PC-9 (cell line): ENCODE measurements at regions of chr14 and their contacts with region 1.

Region 1: GRCh38 chr14:34875031-34875922 is at the start of gene BAZ1A:
- DNase-seq: peak; percentile 56 to 82
- H3K4me3 ChIP-seq: peak within 1 kb of the TSS; percentile 77
- H3K27ac ChIP-seq: peak within 1 kb of the TSS; percentile 92
- H3K4me1 ChIP-seq: peaks cover 18% of the 10 kb centered on the region; the same call in 1 of the 2 replicates
- H3K27me3 ChIP-seq: no peaks in the 10 kb centered on the region
- CTCF ChIP-seq: no peak
- total RNA-seq, gene BAZ1A: 14.3 and 17.3 TPM in 2 replicates

Region 2: GRCh38 chr14:34478261-34478660 is 397.0 kb before region 1 on chr14:
- CTCF ChIA-PET with region 1: no interaction called
- POLR2A ChIA-PET with region 1: interaction called, 12 read pairs
- intact Hi-C with region 1: no loop called
- DNase-seq: no peak
- H3K4me3 ChIP-seq: no peak overlapping the region
- H3K27ac ChIP-seq: no peak overlapping the region
- H3K4me1 ChIP-seq: peaks cover 28% of the 10 kb centered on the region
- H3K27me3 ChIP-seq: no peaks in the 10 kb centered on the region
- CTCF ChIP-seq: no peak

Region 3: DNA sequence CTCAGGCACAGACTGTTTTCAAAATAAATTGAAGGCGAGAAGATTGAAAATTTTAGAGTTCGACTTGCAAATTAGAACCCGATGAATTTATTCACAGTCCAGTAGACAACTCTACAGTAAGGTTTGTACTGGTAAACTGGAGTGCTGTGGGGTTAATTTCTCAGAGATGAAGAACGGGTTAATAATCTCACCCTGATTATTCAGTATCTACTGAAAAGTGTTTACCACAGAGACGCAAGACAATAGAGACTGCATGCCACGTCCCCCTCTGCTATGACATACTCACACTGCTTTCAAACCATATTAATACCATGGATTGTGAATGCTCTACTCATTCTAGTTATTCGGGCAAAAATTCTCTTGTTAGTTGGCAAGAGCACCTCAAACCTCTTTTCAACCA is 197.0 kb before region 1 on chr14:
- CTCF ChIA-PET with region 1: no interaction called
- POLR2A ChIA-PET with region 1: no interaction called
- intact Hi-C with region 1: loop called (anchors 10 kb)
- DNase-seq: no peak
- H3K4me3 ChIP-seq: no peak overlapping the region
- H3K27ac ChIP-seq: peak overlapping the region; percentile 58
- H3K4me1 ChIP-seq: peaks cover 18% of the 10 kb centered on the region
- H3K27me3 ChIP-seq: no peaks in the 10 kb centered on the region
- CTCF ChIP-seq: no peak

Region 4: GRCh38 chr14:34857689-34858449 is 17.4 kb before region 1 on chr14:
- CTCF ChIA-PET with region 1: no interaction called
- POLR2A ChIA-PET with region 1: interaction called, 19 read pairs
- intact Hi-C with region 1: no loop called
- DNase-seq: no peak
- H3K4me3 ChIP-seq: no peak overlapping the region
- H3K27ac ChIP-seq: no peak overlapping the region
- H3K4me1 ChIP-seq: no peaks in the 10 kb centered on the region
- H3K27me3 ChIP-seq: no peaks in the 10 kb centered on the region
- CTCF ChIP-seq: no peak

Region 5: DNA sequence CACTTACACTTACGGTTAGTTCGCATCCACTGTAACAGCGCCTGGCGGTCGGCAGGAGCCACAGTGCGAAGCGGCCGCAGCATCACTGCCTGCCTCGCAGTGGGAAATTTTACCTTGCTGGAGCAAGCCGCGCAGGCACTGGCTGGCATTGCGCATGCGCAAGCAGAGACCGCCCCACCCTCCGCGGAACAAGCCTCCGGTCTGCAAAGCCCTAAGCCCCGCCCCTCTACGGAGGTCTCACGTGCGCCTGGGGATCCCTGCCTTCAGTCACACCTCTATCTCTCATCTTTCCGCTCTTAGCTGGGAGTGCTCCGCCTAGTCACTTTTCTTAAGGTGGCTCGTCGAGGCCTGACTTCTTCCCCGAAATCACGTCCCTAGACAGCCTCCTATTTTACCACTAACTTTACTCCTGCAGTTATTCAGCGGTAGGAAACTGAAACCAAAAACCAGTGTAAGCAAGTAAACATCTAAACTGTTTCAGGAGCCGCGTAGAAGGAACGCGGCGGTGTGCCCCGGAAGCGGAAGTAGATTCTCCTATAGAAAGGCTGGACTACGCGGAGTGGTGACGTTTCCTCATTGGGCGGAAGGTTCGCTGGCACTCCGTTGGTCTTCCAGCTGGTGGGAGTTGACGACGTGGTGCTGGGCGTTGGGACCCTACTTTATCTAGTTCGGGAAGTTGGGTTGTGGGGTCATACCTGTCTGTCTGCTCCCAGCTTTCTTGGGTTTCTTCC is 107.3 kb after region 1 on chr14 and contains the start of gene SRP54:
- CTCF ChIA-PET with region 1: no interaction called
- POLR2A ChIA-PET with region 1: interaction called, 4 read pairs
- intact Hi-C with region 1: loop called (anchors 1 kb)
- DNase-seq: peak; percentile 87 to 96
- H3K4me3 ChIP-seq: peak within 1 kb of the TSS; percentile 89
- H3K27ac ChIP-seq: peak within 1 kb of the TSS; percentile 95
- H3K4me1 ChIP-seq: peaks cover 21% of the 10 kb centered on the region; the same call in 1 of the 2 replicates
- H3K27me3 ChIP-seq: no peaks in the 10 kb centered on the region
- CTCF ChIP-seq: no peak
- total RNA-seq, gene SRP54: 34.0 and 44.5 TPM in 2 replicates